AG04450 (cell line): ENCODE measurements at regions of chr6 and their contacts with region 1.

Region 1: GRCh38 chr6:157667211-157668008 is 155.6 kb upstream of the SNX9 start:
- DNase-seq: no peak
- H3K4me3 ChIP-seq: no peak overlapping the region
- H3K27ac ChIP-seq: no peak overlapping the region
- H3K27me3 ChIP-seq: no peaks in the 10 kb centered on the region
- CTCF ChIP-seq: peak; percentile 91

Region 2: GRCh38 chr6:157314705-157315321 is 352.6 kb before region 1 on chr6:
- CTCF ChIA-PET with region 1: interaction called, 109 read pairs
- POLR2A ChIA-PET with region 1: no interaction called
- DNase-seq: peak; percentile 64
- H3K4me3 ChIP-seq: no peak overlapping the region
- H3K27ac ChIP-seq: no peak overlapping the region
- H3K27me3 ChIP-seq: no peaks in the 10 kb centered on the region
- CTCF ChIP-seq: peak; percentile 95

Region 3: DNA sequence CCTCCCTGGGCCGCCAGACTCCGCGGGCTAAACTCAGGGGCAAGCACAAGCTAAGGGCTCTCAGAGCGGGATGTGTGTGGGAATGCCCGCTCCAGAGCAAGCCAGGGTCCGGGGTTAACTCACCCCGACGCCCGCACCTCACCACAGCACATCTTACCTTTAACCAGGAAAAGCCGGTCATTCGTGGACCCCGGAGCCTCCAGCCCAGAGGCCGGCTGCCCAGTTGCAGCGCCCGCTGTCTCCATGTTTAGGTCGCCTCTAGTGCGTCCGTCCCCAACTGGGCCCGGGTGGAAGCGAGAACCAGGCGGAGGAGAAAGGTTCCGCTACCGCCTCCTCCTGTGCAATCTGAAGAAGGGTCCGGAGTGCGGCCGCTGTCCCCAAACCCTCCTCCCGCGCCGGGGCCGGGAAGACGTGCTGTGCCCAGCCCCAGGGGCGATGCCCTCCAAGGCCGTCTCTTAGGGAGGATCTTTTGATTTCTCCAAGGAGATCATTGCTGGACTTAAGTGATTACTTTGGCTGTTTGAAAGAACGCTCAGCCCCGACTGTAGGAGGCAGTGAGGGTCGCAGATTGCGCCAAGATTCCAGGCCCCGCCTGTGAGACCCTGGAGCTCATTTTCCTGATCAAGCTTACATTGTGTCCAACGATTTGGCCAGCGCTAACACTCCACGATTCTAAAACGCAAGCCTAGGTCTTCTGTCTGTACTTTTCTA is 344.0 kb before region 1 on chr6 and contains the start of gene TMEM242:
- CTCF ChIA-PET with region 1: interaction called, 109 read pairs
- POLR2A ChIA-PET with region 1: interaction called, 7 read pairs
- DNase-seq: peak; percentile 82
- H3K4me3 ChIP-seq: peak within 1 kb of the TSS; percentile 74
- H3K27ac ChIP-seq: peak within 1 kb of the TSS; percentile 85
- H3K27me3 ChIP-seq: no peaks in the 10 kb centered on the region
- CTCF ChIP-seq: peak; percentile 50
- polyA plus RNA-seq, gene TMEM242: 6.8 and 8.6 TPM in 2 replicates

Region 4: GRCh38 chr6:157614026-157614568 is 53.3 kb before region 1 on chr6:
- CTCF ChIA-PET with region 1: interaction called, 24 read pairs
- POLR2A ChIA-PET with region 1: no interaction called
- DNase-seq: no peak
- H3K4me3 ChIP-seq: no peak overlapping the region
- H3K27ac ChIP-seq: peak overlapping the region; percentile 91
- H3K27me3 ChIP-seq: no peaks in the 10 kb centered on the region
- CTCF ChIP-seq: no peak

Region 5: DNA sequence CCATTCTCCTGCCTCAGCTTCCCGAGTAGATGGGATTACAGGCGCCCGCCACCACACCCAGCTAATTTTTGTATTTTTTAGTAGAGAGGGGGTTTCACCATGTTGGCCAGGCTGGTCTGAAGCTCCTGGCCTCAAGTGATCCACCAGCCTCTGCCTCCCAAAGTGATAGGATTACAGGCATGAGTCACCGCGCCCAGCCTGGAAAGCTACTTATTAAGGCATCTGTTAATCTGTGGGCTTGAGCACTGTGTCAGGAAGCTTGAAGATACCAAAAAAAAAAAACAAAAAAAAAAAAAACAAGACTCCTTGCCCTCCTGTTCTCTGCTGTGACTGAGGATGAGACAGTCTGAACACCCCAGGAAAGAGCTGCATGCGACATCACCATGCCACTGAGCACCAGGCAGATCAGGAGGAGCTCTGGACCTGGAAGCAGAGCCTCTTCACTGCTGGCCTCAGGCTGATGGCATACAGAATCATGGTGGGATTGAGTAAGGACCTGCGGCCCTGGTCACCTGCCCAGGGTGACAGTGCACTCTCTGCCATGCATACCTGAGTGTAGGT is 10.9 kb before region 1 on chr6:
- CTCF ChIA-PET with region 1: interaction called, 51 read pairs
- POLR2A ChIA-PET with region 1: no interaction called
- DNase-seq: peak; percentile 15
- H3K4me3 ChIP-seq: no peak overlapping the region
- H3K27ac ChIP-seq: no peak overlapping the region
- H3K27me3 ChIP-seq: peaks cover 3% of the 10 kb centered on the region
- CTCF ChIP-seq: no peak